OCI-LY7 (cell line): ENCODE measurements at regions of chr7 and their contacts with region 1.

Region 1: DNA sequence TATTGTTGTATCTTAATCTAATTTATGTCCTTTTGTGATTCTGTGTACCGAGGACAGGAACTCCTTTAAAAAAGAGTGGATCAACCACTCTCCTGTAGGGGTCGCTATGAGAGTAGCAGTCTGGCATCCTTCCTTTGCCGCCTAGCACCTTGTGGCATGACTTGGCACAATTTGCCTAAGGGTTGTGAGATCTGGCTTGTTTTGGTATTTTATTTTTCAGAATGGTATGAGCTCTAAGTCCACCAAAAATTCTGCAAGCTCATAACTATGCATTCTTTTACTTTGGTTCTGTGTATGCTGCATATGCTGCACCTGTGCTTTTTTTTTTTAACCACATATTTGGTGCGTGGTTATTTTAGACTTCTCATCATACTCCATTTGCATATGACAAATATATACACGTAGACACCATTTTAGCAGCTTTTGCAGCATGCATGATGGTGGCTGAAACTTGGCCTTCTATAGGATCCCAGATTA is 112.8 kb downstream of the CDK14 start:
- DNase-seq: peak; percentile 93
- H3K4me3 ChIP-seq: peak overlapping the region; percentile 86
- H3K27ac ChIP-seq: peak overlapping the region; percentile 92
- H3K4me1 ChIP-seq: peaks cover 55% of the 10 kb centered on the region
- CTCF ChIP-seq: peak; percentile 100

Region 2: DNA sequence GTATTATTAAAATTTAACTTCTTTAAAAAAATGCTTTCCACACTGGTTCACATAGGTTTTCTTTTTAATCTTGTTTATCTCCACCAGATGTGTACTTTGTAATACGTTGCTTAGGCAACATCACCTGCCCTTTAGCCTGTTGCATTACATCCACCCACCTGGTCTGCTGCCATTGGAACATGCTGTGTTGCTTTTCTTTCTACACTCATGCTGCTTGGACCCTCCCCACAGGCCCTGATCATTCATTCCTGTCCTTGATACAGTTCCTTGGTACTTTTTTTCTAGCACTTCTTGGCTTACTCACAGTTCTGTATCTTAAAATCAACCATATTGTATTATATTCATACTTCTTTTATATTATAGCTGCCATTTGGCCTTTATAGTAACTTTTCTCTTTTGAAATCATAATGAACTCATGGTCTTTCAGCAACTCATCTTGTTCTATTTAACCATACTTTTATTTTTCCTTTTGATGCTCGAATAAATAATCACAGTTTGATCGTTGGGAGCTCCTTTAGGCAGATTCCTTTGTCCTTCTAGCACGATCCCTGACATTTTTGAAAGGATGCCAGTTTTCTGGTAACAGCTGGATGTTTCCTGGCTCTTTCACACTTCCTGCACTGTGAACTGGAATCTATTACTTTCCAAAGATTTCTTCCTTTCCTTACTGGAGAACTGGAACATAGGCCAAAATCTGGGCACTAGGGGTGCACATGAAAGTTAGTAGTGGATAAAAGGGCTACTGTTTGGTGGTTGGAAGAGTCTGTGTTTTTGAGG is 12.3 kb after region 1 on chr7:
- CTCF ChIA-PET with region 1: interaction called, 11 read pairs
- POLR2A ChIA-PET with region 1: interaction called, 230 read pairs
- intact Hi-C with region 1: no loop called
- DNase-seq: peak; percentile 67
- H3K4me3 ChIP-seq: peak overlapping the region; percentile 10
- H3K27ac ChIP-seq: peak overlapping the region; percentile 53
- H3K4me1 ChIP-seq: peaks cover 100% of the 10 kb centered on the region
- CTCF ChIP-seq: no peak

Region 3: GRCh38 chr7:90749262-90749661 is 40.4 kb after region 1 on chr7:
- CTCF ChIA-PET with region 1: interaction called, 5 read pairs
- POLR2A ChIA-PET with region 1: interaction called, 9 read pairs
- intact Hi-C with region 1: loop called (anchors 2 kb)
- DNase-seq: peak; percentile 75
- H3K4me3 ChIP-seq: no peak overlapping the region
- H3K27ac ChIP-seq: peak overlapping the region; percentile 61
- H3K4me1 ChIP-seq: peaks cover 73% of the 10 kb centered on the region
- CTCF ChIP-seq: no peak

Region 4: GRCh38 chr7:90834771-90835170 is 125.9 kb after region 1 on chr7:
- CTCF ChIA-PET with region 1: no interaction called
- POLR2A ChIA-PET with region 1: interaction called, 3 read pairs
- intact Hi-C with region 1: loop called (anchors 10 kb)
- DNase-seq: no peak
- H3K4me3 ChIP-seq: no peak overlapping the region
- H3K27ac ChIP-seq: no peak overlapping the region
- H3K4me1 ChIP-seq: no peaks in the 10 kb centered on the region
- CTCF ChIP-seq: no peak

Region 5: GRCh38 chr7:90877201-90877600 is 168.3 kb after region 1 on chr7:
- CTCF ChIA-PET with region 1: no interaction called
- POLR2A ChIA-PET with region 1: no interaction called
- intact Hi-C with region 1: no loop called
- DNase-seq: no peak
- H3K4me3 ChIP-seq: no peak overlapping the region
- H3K27ac ChIP-seq: no peak overlapping the region
- H3K4me1 ChIP-seq: no peaks in the 10 kb centered on the region
- CTCF ChIP-seq: no peak

Region 6: GRCh38 chr7:91034459-91035368 is 325.8 kb after region 1 on chr7:
- CTCF ChIA-PET with region 1: interaction called, 4 read pairs
- POLR2A ChIA-PET with region 1: interaction called, 9 read pairs
- intact Hi-C with region 1: loop called (anchors 1 kb)
- DNase-seq: peak; percentile 61
- H3K4me3 ChIP-seq: no peak overlapping the region
- H3K27ac ChIP-seq: no peak overlapping the region
- H3K4me1 ChIP-seq: peaks cover 2% of the 10 kb centered on the region
- CTCF ChIP-seq: peak; percentile 86